B cell (primary cell): ENCODE measurements at regions of chr3 and their contacts with region 1.

Region 1: GRCh38 chr3:30613133-30613825 is 6.9 kb downstream of the TGFBR2 start:
- DNase-seq: no peak
- ATAC-seq: no peak
- H3K4me3 ChIP-seq: peak overlapping the region in 1 of 5 experiments; percentile 98
- H3K4me3 Mint-ChIP-seq: peak overlapping the region; percentile 92
- H3K27ac ChIP-seq: peak overlapping the region; percentile 17 to 79
- H3K27ac Mint-ChIP-seq: peak overlapping the region; percentile 33
- H3K4me1 ChIP-seq: peaks cover 84 to 95% of the 10 kb centered on the region in 2 donors
- H3K4me1 Mint-ChIP-seq: peaks cover 91% of the 10 kb centered on the region
- H3K27me3 ChIP-seq: no peaks in the 10 kb centered on the region
- H3K27me3 Mint-ChIP-seq: no peaks in the 10 kb centered on the region
- CTCF ChIP-seq: no peak

Region 2: GRCh38 chr3:30508339-30508738 is 104.9 kb before region 1 on chr3:
- CTCF ChIA-PET with region 1: no interaction called
- POLR2A ChIA-PET with region 1: no interaction called
- intact Hi-C with region 1: no loop called
- DNase-seq: no peak
- ATAC-seq: no peak
- H3K4me3 ChIP-seq: no peak overlapping the region
- H3K4me3 Mint-ChIP-seq: no peak overlapping the region
- H3K27ac ChIP-seq: no peak overlapping the region
- H3K27ac Mint-ChIP-seq: no peak overlapping the region
- H3K4me1 ChIP-seq: peaks cover 6 to 7% of the 10 kb centered on the region in 2 donors
- H3K4me1 Mint-ChIP-seq: peaks cover 32% of the 10 kb centered on the region
- H3K27me3 ChIP-seq: no peaks in the 10 kb centered on the region
- H3K27me3 Mint-ChIP-seq: no peaks in the 10 kb centered on the region
- CTCF ChIP-seq: no peak

Region 3: GRCh38 chr3:30623351-30623750 is 10.1 kb after region 1 on chr3:
- CTCF ChIA-PET with region 1: interaction called, 19 read pairs
- POLR2A ChIA-PET with region 1: no interaction called
- intact Hi-C with region 1: loop called (anchors 1 kb)
- DNase-seq: no peak
- ATAC-seq: no peak
- H3K4me3 ChIP-seq: peak overlapping the region in 1 of 5 experiments; percentile 29
- H3K4me3 Mint-ChIP-seq: peak overlapping the region; percentile 65
- H3K27ac ChIP-seq: peak overlapping the region; percentile 42 to 89
- H3K27ac Mint-ChIP-seq: peak overlapping the region; percentile 93
- H3K4me1 ChIP-seq: peaks cover 94 to 100% of the 10 kb centered on the region in 2 donors
- H3K4me1 Mint-ChIP-seq: peaks cover 94% of the 10 kb centered on the region
- H3K27me3 ChIP-seq: no peaks in the 10 kb centered on the region
- H3K27me3 Mint-ChIP-seq: no peaks in the 10 kb centered on the region
- CTCF ChIP-seq: no peak